Activated CD4-positive, alpha-beta memory T cell treated with anti-CD3 and anti-CD28 coated beads for 36 hours (primary cell): ENCODE measurements at regions of chr16 and their contacts with region 1.

Region 1: GRCh38 chr16:4506450-4506849 is 30.3 kb downstream of the HMOX2 start:
- DNase-seq: peak; percentile 73
- H3K4me3 Mint-ChIP-seq: no peak overlapping the region
- H3K27ac Mint-ChIP-seq: peak overlapping the region; percentile 93
- H3K4me1 Mint-ChIP-seq: peaks cover 44% of the 10 kb centered on the region
- H3K27me3 Mint-ChIP-seq: no peaks in the 10 kb centered on the region

Region 2: DNA sequence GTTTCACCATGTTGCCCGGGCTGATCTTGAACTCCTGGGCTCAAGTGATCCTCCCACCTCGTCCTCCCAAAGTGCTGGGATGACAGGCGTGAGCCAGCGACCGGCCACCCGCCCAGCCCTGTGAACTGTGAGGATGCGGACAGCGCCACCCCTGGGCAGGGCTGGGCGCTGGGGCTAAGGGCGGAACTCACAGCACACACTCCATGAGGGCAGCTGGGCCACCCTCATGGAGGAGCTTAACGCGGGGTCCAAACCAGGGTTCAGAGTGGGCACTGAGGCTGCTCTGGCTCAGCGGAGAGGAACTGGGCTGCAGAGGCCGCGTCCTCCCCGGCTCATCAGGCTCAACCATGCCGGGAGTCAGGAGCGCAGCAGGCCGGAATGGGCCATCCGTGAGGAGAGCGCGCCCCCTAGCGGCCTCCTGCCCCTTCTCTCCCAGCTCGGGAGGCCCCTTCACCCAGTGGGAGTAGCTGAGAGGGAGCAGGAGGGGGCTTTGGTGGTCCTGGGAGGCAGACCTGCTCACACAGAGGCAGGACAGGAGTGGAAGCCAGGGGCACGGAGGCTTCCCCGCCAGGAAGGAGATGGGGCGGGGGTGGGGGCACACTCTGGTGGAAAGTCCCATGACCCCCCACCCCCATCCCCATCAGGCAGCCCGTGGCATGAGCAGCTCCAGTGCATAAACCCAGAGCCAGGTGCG is 103.9 kb before region 1 on chr16:
- CTCF ChIA-PET with region 1: no interaction called
- POLR2A ChIA-PET with region 1: no interaction called
- intact Hi-C with region 1: no loop called
- DNase-seq: peak; percentile 74
- H3K4me3 Mint-ChIP-seq: no peak overlapping the region
- H3K27ac Mint-ChIP-seq: no peak overlapping the region
- H3K4me1 Mint-ChIP-seq: no peaks in the 10 kb centered on the region
- H3K27me3 Mint-ChIP-seq: no peaks in the 10 kb centered on the region

Region 3: GRCh38 chr16:4475880-4476788 is 30.3 kb before region 1 on chr16 and contains the start of gene HMOX2:
- CTCF ChIA-PET with region 1: interaction called, 43 read pairs
- POLR2A ChIA-PET with region 1: interaction called, 12 read pairs
- intact Hi-C with region 1: loop called (anchors 1 kb)
- DNase-seq: peak; percentile 97
- H3K4me3 Mint-ChIP-seq: peak within 1 kb of the TSS; percentile 89
- H3K27ac Mint-ChIP-seq: peak within 1 kb of the TSS; percentile 87
- H3K4me1 Mint-ChIP-seq: peaks cover 38% of the 10 kb centered on the region
- H3K27me3 Mint-ChIP-seq: no peaks in the 10 kb centered on the region
- total RNA-seq, gene HMOX2: 69.1 to 76.0 TPM

Region 4: DNA sequence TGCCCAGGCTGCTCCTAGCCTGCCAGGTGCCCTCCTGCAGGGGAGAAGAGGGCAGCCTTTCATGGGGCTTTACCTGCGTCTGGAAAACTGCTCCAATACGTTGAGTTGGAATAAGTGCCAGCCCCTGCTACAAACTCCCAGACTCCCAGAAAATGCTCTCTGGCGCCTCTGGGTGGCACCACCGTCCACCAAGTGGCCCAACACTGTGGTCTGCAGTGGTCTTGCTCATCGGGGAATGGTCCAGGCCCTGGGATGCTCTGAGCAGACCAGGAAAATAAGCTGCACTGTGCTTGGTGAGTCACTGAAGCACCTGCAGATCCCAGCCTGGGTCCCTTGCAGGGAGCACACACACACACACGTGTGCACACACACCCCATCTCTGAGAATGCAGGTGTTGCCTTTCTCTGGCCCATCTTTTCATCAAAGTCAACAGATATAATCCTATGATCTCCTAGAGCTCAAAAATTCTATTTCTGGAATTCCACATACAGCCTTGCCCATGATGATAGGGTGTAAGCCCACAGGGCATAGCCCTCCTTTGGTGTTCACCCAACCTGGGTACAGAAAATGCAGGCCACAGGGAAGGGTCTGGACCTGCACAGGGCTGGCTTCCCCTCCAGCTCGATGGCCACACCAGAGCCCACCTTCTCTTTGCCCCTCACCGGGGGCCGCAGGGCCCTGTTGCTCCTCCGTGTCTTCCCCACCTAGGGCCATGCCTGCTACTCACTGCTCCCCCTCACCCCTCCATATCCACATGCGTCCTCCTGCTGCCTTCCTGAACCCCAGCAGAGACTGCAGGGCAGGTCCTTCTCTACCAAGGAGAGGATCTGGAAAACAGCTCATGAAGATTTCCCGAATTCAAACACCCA is 11.6 kb after region 1 on chr16:
- CTCF ChIA-PET with region 1: interaction called, 11 read pairs
- POLR2A ChIA-PET with region 1: interaction called, 3 read pairs
- intact Hi-C with region 1: no loop called
- DNase-seq: peak; percentile 29
- H3K4me3 Mint-ChIP-seq: no peak overlapping the region
- H3K27ac Mint-ChIP-seq: no peak overlapping the region
- H3K4me1 Mint-ChIP-seq: peaks cover 29% of the 10 kb centered on the region
- H3K27me3 Mint-ChIP-seq: no peaks in the 10 kb centered on the region

Region 5: GRCh38 chr16:4550591-4550990 is 44.1 kb after region 1 on chr16:
- CTCF ChIA-PET with region 1: interaction called, 53 read pairs
- POLR2A ChIA-PET with region 1: no interaction called
- intact Hi-C with region 1: loop called (anchors 1 kb)
- DNase-seq: no peak
- H3K4me3 Mint-ChIP-seq: no peak overlapping the region
- H3K27ac Mint-ChIP-seq: no peak overlapping the region
- H3K4me1 Mint-ChIP-seq: peaks cover 2% of the 10 kb centered on the region
- H3K27me3 Mint-ChIP-seq: no peaks in the 10 kb centered on the region

Region 6: DNA sequence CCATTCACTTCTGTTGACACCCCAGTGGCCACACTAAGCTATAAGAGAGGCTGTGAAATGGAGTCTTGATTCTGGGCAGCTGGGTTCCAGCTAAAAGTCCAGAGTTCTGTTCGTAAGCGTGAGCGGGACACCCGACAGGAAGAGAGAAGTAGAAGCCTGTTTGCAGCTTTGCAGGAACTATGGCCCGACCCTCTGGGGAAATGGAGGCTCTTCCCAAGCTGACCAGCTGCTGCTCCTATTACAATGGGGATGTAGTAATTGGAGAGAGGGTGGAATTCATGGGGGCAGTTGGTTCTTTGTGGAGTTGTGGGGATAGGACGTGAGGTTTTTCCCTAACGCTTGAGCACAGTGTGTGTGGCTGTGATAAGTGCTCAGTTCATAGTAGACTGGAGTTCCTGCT is 79.8 kb after region 1 on chr16:
- CTCF ChIA-PET with region 1: interaction called, 84 read pairs
- POLR2A ChIA-PET with region 1: no interaction called
- intact Hi-C with region 1: loop called (anchors 1 kb)
- DNase-seq: no peak
- H3K4me3 Mint-ChIP-seq: no peak overlapping the region
- H3K27ac Mint-ChIP-seq: no peak overlapping the region
- H3K4me1 Mint-ChIP-seq: peaks cover 3% of the 10 kb centered on the region
- H3K27me3 Mint-ChIP-seq: peaks cover 5% of the 10 kb centered on the region

Region 7: GRCh38 chr16:4624015-4624826 is 117.8 kb after region 1 on chr16 and contains the start of gene MGRN1:
- CTCF ChIA-PET with region 1: interaction called, 24 read pairs
- POLR2A ChIA-PET with region 1: no interaction called
- intact Hi-C with region 1: no loop called
- DNase-seq: peak; percentile 96
- H3K4me3 Mint-ChIP-seq: peak within 1 kb of the TSS; percentile 99
- H3K27ac Mint-ChIP-seq: peak within 1 kb of the TSS; percentile 98
- H3K4me1 Mint-ChIP-seq: peaks cover 28% of the 10 kb centered on the region
- H3K27me3 Mint-ChIP-seq: no peaks in the 10 kb centered on the region
- total RNA-seq, gene MGRN1: 72.7 to 73.2 TPM